Cardiac septum (tissue), 1 donor: ENCODE measurements at regions of chr3 and their contacts with region 1.

Region 1: GRCh38 chr3:178325330-178325729 is 210.9 kb upstream of the KCNMB2 start:
- DNase-seq: no peak

Region 2: GRCh38 chr3:176953106-176954060 is 1371.9 kb before region 1 on chr3:
- intact Hi-C with region 1: loop called (anchors 10 kb)
- DNase-seq: peak; percentile 84

Region 3: GRCh38 chr3:177041021-177041729 is 1284.2 kb before region 1 on chr3:
- intact Hi-C with region 1: loop called (anchors 10 kb)
- DNase-seq: no peak

Region 4: GRCh38 chr3:177597311-177598096 is 727.8 kb before region 1 on chr3:
- intact Hi-C with region 1: loop called (anchors 5 kb)
- DNase-seq: no peak

Region 5: GRCh38 chr3:177777699-177778098 is 547.6 kb before region 1 on chr3:
- intact Hi-C with region 1: loop called (anchors 5 kb)
- DNase-seq: no peak

Region 6: DNA sequence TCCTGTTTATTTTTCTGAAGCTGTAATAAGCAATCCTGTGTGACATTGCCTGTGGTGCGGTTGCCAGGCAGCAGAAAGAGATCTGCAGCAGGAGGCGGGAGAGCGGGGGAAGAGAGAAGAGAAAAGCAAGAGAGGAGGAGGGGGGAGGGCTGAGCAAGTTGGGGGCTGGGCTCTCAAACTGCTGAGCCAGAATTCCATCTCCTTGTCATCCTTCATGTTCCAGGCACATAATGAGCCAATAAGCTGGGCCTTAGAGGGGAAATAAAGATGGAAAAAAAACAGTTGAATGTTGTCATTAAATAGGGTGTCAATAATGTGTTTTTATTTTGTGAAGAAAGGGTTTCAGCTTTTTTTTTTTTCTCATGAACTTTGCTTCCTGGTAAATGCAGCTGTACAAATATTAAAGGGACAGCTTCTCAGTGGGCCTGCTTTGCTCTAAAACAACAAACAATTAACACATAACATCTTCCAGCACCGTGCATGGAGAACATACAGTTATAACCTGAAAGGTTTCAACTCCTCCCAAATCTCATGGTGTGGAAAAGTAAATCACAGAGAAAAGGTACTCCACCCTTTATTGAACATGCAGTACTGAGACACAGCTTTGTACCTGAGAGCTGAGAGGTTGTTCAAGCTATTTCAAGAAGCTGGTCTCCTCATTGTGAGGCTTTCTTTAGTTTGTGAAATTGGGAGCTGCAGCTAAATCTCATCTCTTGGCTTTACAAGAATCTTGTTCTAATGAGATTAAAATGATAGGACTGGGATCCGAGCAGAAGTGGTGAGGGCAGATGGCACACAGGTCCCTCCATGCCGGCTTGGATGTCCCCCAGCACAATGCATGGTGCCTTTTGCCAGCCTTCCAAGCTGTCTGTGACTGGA is 240.2 kb before region 1 on chr3:
- intact Hi-C with region 1: loop called (anchors 5 kb)
- DNase-seq: peak; percentile 90

Region 7: GRCh38 chr3:178367817-178368617 is 42.7 kb after region 1 on chr3:
- intact Hi-C with region 1: loop called (anchors 5 kb)
- DNase-seq: no peak

Region 8: DNA sequence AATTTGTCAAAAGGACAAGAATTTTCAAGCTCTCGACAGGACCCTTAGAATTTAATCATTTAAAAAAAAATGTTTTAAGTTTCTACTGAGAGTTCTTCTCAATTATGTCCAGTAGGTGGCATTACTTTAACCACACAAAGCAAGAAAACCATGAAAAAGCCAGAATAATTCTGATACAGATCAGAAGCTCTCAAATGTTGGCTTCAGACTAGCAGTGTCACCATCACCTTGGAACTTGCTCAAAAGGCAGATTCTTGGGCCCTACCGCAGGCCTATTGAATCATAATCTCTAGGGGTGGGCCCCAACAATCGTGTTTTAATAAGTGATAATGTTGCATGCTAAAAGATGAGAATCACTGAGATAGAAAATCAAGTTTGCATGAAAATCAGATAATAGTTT is 111.4 kb after region 1 on chr3:
- intact Hi-C with region 1: no loop called
- DNase-seq: no peak